ENCODE measurements at regions of chr5 and their contacts with region 1.

Region 1: GRCh38 chr5:149828161-149828884 is 98.2 kb downstream of the PPARGC1B start:
- DNase-seq: peak; percentile 62
- H3K4me3 Mint-ChIP-seq: no peak overlapping the region
- H3K27ac Mint-ChIP-seq: no peak overlapping the region
- H3K4me1 Mint-ChIP-seq: peaks cover 11% of the 10 kb centered on the region
- H3K27me3 Mint-ChIP-seq: no peaks in the 10 kb centered on the region

Region 2: DNA sequence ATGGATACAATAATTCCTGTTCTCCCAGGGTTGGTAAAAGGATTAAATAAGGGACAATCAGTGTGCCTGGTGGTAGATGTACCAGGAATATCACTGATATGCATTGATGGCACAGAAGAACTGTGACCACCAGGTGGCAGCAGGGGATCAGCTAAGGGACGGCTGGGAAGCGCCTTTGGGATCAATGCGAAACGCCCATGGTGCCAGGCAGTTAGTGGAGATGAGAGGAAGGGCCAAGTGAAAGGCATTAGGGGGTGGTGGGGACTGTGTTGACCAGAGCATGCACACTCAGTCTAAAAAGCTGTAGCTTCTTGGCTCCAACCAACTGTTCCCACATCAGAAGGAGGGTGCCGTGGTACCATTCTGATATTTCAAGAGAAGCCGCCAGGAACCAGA is 191.5 kb before region 1 on chr5:
- intact Hi-C with region 1: loop called (anchors 1 kb)
- DNase-seq: no peak
- H3K4me3 Mint-ChIP-seq: no peak overlapping the region
- H3K27ac Mint-ChIP-seq: no peak overlapping the region
- H3K4me1 Mint-ChIP-seq: peaks cover 18% of the 10 kb centered on the region
- H3K27me3 Mint-ChIP-seq: no peaks in the 10 kb centered on the region

Region 3: GRCh38 chr5:149667084-149667828 is 161.1 kb before region 1 on chr5:
- intact Hi-C with region 1: loop called (anchors 1 kb)
- DNase-seq: no peak
- H3K4me3 Mint-ChIP-seq: no peak overlapping the region
- H3K27ac Mint-ChIP-seq: no peak overlapping the region
- H3K4me1 Mint-ChIP-seq: peaks cover 3% of the 10 kb centered on the region
- H3K27me3 Mint-ChIP-seq: peaks cover 1% of the 10 kb centered on the region

Region 4: DNA sequence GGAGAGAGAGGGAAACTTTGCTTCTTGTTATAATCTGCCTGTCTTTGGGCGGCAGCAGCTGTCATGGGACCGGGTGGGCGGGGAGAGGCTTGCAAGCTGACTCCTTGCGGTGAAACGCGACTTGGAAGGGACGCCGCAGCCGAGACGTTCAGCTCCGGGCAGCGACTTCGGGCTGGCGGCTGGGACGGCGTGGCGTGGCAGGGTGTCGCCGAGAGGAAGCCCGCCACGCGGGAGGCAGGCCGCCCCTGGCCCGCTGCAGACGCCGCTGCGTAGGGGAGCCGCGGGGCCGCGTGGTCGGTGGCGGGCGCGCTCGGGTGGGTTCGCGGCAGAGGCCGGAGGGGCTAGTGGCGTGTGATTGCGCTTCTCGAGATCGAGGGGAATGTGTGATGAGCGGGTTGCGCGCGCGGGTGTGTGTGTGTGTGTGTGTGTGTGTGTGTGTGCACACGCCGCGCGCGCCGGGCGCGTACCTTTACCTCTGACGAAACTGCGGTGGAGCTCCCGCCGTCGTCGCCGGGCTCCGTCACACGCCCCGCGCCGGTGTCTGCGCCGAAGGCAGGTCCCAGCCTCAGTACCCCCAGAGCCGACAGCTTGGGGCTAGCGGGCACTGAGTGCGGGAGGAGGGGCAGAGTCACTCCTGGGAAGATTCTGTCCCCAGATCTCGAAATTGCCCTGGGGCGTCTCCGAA is 96.5 kb before region 1 on chr5:
- intact Hi-C with region 1: loop called (anchors 5 kb)
- DNase-seq: peak; percentile 44
- H3K4me3 Mint-ChIP-seq: peak overlapping the region; percentile 82
- H3K27ac Mint-ChIP-seq: no peak overlapping the region
- H3K4me1 Mint-ChIP-seq: peaks cover 2% of the 10 kb centered on the region
- H3K27me3 Mint-ChIP-seq: peaks cover 15% of the 10 kb centered on the region

Region 5: GRCh38 chr5:149851211-149851610 is 22.9 kb after region 1 on chr5:
- intact Hi-C with region 1: no loop called
- DNase-seq: no peak
- H3K4me3 Mint-ChIP-seq: no peak overlapping the region
- H3K27ac Mint-ChIP-seq: no peak overlapping the region
- H3K4me1 Mint-ChIP-seq: no peaks in the 10 kb centered on the region
- H3K27me3 Mint-ChIP-seq: no peaks in the 10 kb centered on the region